Left colon (tissue), 2 donors: ENCODE measurements at regions of chr7 and their contacts with region 1.

Region 1: DNA sequence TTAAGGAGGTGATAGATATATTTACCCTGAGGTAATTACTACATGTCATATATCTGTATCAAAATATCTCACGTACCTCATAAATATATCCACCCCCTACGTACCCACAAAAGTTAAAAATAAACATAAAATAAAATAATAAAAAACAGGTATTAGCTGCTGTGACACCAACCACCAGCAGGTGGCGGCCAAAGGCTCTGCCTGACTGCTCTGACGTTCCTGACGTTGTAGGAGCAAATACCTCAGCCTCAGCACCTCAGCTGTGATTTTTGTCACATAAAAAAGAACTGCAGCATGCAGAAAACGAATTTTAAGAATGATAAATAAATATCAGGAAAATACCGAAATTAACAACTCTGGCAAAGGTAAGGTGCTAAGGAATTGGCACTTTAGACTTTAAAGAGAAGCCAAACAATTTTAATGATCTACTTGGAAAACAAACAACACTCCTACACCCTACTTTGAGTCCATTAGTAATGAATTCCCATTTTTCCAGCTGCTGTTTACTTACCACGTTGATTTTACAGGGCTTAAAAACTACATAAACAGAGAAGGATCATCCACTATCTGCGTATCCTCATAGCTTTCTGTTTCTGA is 125.4 kb upstream of the TARP start:
- DNase-seq: peak in 1 of 2 donors; percentile 52
- ATAC-seq: peak; percentile 52

Region 2: GRCh38 chr7:38070718-38071117 is 328.1 kb before region 1 on chr7:
- intact Hi-C with region 1: no loop called
- DNase-seq: no peak
- ATAC-seq: no peak

Region 3: DNA sequence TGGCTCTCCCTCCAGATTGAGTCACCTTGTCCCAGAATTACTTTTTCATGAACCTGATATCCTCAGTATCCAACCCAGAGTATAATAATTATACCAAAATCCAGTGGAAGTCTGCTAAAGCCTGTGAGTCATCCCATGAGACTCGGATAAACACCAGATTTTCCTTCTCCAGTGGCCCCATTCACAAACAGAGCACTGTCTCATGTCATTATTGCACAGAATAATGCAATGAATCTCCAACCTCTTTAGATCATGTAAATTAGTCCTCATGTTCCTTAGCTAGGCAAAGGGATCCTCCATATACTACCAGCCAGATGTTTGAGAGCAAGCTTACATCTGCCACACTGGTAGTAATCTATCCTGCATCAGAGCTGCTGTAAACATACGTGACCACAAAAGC is 143.3 kb after region 1 on chr7:
- intact Hi-C with region 1: no loop called
- DNase-seq: no peak
- ATAC-seq: no peak

Region 4: GRCh38 chr7:39465055-39465929 is 1066.5 kb after region 1 on chr7:
- intact Hi-C with region 1: loop called in 1 of 2 experiments (anchors 5 kb)
- DNase-seq: peak in 1 of 2 donors; percentile 57
- ATAC-seq: peak; percentile 89